ENCODE measurements at regions of chr16 and their contacts with region 1.

Region 1: DNA sequence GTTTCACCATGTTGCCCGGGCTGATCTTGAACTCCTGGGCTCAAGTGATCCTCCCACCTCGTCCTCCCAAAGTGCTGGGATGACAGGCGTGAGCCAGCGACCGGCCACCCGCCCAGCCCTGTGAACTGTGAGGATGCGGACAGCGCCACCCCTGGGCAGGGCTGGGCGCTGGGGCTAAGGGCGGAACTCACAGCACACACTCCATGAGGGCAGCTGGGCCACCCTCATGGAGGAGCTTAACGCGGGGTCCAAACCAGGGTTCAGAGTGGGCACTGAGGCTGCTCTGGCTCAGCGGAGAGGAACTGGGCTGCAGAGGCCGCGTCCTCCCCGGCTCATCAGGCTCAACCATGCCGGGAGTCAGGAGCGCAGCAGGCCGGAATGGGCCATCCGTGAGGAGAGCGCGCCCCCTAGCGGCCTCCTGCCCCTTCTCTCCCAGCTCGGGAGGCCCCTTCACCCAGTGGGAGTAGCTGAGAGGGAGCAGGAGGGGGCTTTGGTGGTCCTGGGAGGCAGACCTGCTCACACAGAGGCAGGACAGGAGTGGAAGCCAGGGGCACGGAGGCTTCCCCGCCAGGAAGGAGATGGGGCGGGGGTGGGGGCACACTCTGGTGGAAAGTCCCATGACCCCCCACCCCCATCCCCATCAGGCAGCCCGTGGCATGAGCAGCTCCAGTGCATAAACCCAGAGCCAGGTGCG is 13.8 kb downstream of the CORO7 start:
- DNase-seq: peak; percentile 65
- ATAC-seq: peak; percentile 93
- H3K4me3 ChIP-seq: peak overlapping the region; percentile 31; the same call in 1 of the 2 replicates
- H3K27ac ChIP-seq: no peak overlapping the region
- H3K4me1 ChIP-seq: no peaks in the 10 kb centered on the region
- H3K27me3 ChIP-seq: no peaks in the 10 kb centered on the region
- CTCF ChIP-seq: peak; percentile 88

Region 2: DNA sequence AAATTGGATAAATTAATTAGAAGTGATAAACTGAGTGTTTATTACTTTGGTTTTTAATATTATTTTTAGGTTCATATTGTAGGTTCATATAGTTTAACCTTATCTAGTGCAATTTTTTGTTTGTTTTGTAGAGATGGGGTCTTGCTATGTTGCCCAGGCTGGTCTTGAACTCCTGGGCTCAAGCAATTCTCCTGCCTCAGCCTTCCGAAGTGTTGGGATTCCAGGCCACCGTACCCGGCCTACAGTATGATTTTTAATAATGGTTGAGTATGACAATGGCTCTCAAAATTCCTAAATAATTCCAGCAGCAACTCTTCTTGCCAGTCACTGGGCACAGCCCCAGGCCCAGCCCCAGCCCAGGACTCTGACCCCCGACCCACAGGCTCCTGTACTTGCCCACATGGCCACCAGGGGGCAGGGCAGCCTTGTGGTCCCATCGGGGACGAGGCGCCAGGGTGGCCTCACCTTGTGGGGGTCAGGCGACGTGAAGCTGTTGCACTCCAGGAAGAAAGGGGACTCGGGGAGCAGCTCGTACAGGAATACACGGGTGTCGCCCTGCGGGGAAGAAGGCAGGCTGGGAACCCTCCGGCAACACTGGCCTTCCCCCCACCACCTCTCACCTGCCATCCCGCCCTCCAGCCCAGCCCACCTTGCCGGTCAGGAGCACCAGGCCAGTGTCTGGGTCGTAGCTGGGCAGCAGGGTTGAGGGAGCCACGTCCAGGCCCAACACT is 43.6 kb before region 1 on chr16:
- CTCF ChIA-PET with region 1: no interaction called
- POLR2A ChIA-PET with region 1: no interaction called
- intact Hi-C with region 1: loop called (anchors 2 kb)
- DNase-seq: peak; percentile 52
- ATAC-seq: peak; percentile 62
- H3K4me3 ChIP-seq: no peak overlapping the region
- H3K27ac ChIP-seq: no peak overlapping the region
- H3K4me1 ChIP-seq: no peaks in the 10 kb centered on the region
- H3K27me3 ChIP-seq: no peaks in the 10 kb centered on the region
- CTCF ChIP-seq: peak; percentile 91

Region 3: GRCh38 chr16:4538350-4539235 is 136.0 kb after region 1 on chr16 and contains the start of gene CDIP1:
- CTCF ChIA-PET with region 1: no interaction called
- POLR2A ChIA-PET with region 1: no interaction called
- intact Hi-C with region 1: no loop called
- DNase-seq: peak; percentile 86
- ATAC-seq: peak; percentile 88
- H3K4me3 ChIP-seq: peak within 1 kb of the TSS; percentile 70
- H3K27ac ChIP-seq: no peak within 1 kb of the TSS
- H3K4me1 ChIP-seq: no peaks in the 10 kb centered on the region
- H3K27me3 ChIP-seq: no peaks in the 10 kb centered on the region
- CTCF ChIP-seq: no peak
- total RNA-seq, gene CDIP1: 7.1 and 8.7 TPM in 2 replicates

Region 4: DNA sequence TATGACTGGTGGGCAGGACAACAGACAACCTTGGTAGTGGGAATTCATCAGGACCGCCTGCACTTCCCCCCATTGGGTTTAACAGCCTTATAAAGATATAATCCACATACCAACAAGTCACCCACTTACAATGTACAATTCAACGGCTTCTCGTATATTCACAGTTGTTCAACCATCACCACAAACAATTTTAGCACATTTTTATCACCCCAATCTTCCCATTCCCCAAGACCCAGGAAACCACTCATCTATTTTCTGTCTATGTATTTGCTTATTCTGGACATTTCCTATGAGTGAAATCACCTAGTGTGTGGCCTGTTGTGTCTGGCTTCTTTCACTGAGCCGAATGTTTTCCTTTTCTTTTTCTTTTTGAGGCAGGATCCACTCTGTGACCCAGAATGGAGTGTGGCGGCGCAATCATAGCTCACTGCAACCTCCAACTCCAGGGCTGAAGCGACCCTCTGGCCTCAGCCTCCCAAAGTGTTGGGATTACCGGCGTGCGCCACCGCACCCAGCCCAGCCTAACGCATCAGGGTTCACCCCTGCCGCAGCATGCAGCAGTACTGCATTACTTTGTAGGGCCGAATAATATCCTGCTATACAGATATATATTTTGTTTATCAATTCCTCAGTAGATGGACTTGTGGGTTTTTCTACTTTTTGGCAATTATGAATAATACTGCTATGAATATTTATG is 320.6 kb after region 1 on chr16:
- CTCF ChIA-PET with region 1: no interaction called
- POLR2A ChIA-PET with region 1: no interaction called
- intact Hi-C with region 1: no loop called
- DNase-seq: no peak
- ATAC-seq: no peak
- H3K4me3 ChIP-seq: no peak overlapping the region
- H3K27ac ChIP-seq: no peak overlapping the region
- H3K4me1 ChIP-seq: no peaks in the 10 kb centered on the region
- H3K27me3 ChIP-seq: no peaks in the 10 kb centered on the region
- CTCF ChIP-seq: no peak